ENCODE measurements at regions of chr17 and their contacts with region 1.

Region 1: DNA sequence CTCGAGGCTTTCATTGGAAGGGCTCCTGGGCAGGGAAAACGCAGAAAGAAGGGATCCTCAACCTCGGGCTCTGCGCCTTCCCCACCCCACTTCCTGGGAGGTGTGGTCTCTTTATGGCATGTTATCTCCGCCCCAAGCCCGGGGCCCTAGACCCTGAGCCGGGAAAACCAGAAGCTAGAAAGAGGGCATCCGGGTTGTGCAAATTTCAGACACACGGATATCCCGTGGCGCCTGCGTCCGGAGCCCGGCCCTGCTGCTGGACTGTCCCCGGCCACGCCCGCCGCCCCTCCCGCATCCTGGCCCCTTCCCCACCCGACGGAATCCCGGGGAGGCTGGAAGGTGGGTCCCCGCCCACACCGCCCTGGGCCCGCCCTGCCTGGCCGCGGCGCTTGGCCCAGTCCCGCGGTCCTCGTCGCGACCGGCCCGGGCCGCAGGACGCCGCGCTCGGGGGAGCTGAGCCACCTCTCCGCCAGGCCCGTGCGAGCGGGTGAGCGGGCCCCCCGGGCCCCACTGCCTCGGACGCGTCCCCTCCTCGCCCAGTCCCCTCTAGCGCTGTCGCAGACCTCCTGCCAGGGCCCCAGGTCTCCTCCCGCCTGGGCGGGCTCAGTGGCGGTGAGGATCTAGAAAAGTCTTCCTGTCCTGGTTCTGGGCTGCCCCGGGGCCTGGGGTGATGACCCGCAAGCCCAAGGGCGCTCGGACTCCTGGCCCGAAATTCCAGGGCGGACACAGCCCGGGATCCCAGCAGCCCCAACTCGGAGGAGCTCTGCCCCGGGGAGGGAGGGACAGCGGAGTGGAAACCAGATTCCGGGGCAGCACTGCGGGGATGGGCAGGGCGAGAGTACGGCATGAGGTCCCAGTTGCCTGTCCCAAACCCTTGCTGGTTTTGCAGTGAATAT is at the start of gene SLC16A5:
- DNase-seq: peak; percentile 61
- H3K4me3 Mint-ChIP-seq: peak within 1 kb of the TSS; percentile 75
- H3K27ac Mint-ChIP-seq: peak within 1 kb of the TSS; percentile 58
- H3K4me1 Mint-ChIP-seq: peaks cover 48% of the 10 kb centered on the region
- H3K27me3 Mint-ChIP-seq: no peaks in the 10 kb centered on the region
- total RNA-seq, gene SLC16A5: 10.4 TPM

Region 2: GRCh38 chr17:75077496-75078283 is 10.1 kb before region 1 on chr17:
- CTCF ChIA-PET with region 1: interaction called, 5 read pairs
- POLR2A ChIA-PET with region 1: interaction called, 16 read pairs
- DNase-seq: peak; percentile 66
- H3K4me3 Mint-ChIP-seq: peak overlapping the region; percentile 50
- H3K27ac Mint-ChIP-seq: peak overlapping the region; percentile 52
- H3K4me1 Mint-ChIP-seq: peaks cover 29% of the 10 kb centered on the region
- H3K27me3 Mint-ChIP-seq: no peaks in the 10 kb centered on the region